ENCODE measurements at regions of chr7 and their contacts with region 1.

Region 1: DNA sequence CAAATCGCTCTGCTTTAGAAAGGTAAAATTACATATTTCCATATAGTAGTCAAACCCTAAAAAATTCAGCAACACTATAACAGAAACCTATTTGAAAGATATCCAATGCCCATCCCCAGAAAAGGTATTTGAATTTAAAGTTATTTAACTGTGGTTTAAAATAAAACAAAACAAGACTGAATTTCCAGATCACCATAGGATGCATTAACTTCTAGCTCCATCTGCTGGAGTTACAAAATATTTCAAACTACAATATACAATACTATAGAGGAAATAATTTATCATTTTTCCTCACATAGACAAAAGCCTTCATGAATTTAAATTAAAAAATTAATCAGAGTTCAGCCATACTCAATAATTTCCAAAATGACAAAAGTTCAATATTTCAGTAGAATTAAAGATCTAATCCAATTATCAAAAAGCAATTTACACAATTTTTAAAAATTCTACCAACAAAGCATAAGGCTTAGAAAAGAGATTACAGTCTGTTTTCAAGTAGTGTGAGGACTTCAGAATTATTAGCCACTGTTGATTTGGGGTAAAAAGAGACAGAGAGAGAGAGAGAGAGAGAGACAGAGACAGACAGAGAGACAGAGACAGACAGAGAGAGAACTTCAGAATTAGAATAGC is 75.9 kb downstream of the LMBR1 start:
- DNase-seq: peak; percentile 10
- ATAC-seq: no peak
- H3K4me3 ChIP-seq: no peak overlapping the region
- H3K27ac ChIP-seq: no peak overlapping the region
- H3K4me1 ChIP-seq: peaks cover 21% of the 10 kb centered on the region
- H3K27me3 ChIP-seq: no peaks in the 10 kb centered on the region
- CTCF ChIP-seq: peak; percentile 41
- EP300 ChIP-seq: no peak
- POLR2A ChIP-seq: no peak
- RAD21 ChIP-seq: no peak

Region 2: GRCh38 chr7:156650042-156650441 is 167.0 kb before region 1 on chr7:
- CTCF ChIA-PET with region 1: interaction called, 3 read pairs
- POLR2A ChIA-PET with region 1: no interaction called
- in situ Hi-C with region 1: no loop called
- intact Hi-C with region 1: loop called (anchors 2 kb)
- DNase-seq: peak; percentile 57
- ATAC-seq: peak; percentile 99
- H3K4me3 ChIP-seq: no peak overlapping the region
- H3K27ac ChIP-seq: no peak overlapping the region
- H3K4me1 ChIP-seq: peaks cover 10% of the 10 kb centered on the region; the same call in 1 of the 2 replicates
- H3K27me3 ChIP-seq: no peaks in the 10 kb centered on the region
- CTCF ChIP-seq: peak; percentile 90
- EP300 ChIP-seq: no peak
- POLR2A ChIP-seq: no peak
- RAD21 ChIP-seq: peak; percentile 82

Measured in HepG2 (cell line).